ENCODE measurements at regions of chr7 and their contacts with region 1.

Region 1: GRCh38 chr7:2567679-2568278 is 9.0 kb downstream of the IQCE start:
- DNase-seq: peak in 4 of 5 donors; percentile 43 to 72 (median 48)
- ATAC-seq: peak; percentile 79 to 93 (median 84)
- H3K4me3 ChIP-seq: peak overlapping the region in 2 of 12 donors; percentile 2 to 40
- H3K27ac ChIP-seq: no peak overlapping the region
- H3K4me1 ChIP-seq: peaks cover 0 to 19% (median 9%) of the 10 kb centered on the region in 12 donors
- H3K27me3 ChIP-seq: no peaks in the 10 kb centered on the region
- CTCF ChIP-seq: peak; percentile 46 to 70 (median 60)
- POLR2A ChIP-seq: no peak

Region 2: DNA sequence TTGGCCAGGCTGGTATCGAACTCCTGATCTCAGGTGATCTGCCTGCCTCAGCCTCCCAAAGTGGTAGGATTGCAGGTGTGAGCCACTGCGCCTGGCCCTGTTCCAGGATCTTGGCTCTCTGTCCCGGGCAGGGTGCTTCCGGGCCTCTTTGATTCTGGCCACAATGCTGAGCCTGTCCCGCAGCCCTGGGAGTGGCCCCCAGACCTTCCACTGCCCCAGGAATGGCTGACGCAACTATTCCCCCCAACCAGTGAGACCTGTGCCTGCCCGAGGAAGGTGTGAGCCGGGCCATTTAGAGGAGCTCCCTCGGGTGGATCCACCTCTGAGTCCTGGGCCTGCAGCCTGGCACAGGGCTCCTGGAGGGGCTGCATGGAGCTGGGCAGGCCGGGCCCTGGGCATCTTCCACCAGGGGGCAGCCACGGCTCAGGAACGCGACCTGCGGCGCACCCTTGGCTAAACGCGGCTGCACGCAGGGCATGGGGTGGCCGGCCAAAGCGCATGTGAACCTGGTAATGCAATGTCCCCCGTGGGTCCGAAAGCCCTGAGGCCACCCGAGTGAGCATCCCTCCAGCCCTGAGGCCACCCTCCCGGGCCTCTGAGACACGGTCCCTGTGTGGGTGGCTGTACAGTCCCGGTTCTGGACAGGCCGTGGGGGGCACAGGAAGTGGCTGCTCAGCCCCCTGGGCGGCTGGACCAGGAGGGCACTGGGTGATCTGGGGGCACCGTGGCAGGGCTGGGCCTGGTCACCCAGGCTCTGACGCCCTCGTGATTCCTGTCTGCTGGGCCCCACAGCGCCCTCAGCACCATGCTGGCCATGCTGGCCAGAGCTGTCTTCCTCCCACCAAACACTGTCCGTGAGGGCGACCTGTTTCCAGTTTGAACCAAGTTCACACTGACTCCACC is 116.4 kb before region 1 on chr7:
- intact Hi-C with region 1: loop called in 2 of 10 experiments (anchors 10 kb)
- DNase-seq: peak; percentile 84 to 94 (median 86)
- ATAC-seq: peak; percentile 92 to 97 (median 96)
- H3K4me3 ChIP-seq: peak overlapping the region in 11 of 12 donors; percentile 14 to 63 (median 47)
- H3K27ac ChIP-seq: peak overlapping the region in 5 of 12 donors; percentile 3 to 33 (median 13)
- H3K4me1 ChIP-seq: peaks cover 0 to 15% (median 11%) of the 10 kb centered on the region in 12 donors
- H3K27me3 ChIP-seq: no peaks in the 10 kb centered on the region
- CTCF ChIP-seq: peak; percentile 82 to 95 (median 90)
- POLR2A ChIP-seq: no peak

Region 3: DNA sequence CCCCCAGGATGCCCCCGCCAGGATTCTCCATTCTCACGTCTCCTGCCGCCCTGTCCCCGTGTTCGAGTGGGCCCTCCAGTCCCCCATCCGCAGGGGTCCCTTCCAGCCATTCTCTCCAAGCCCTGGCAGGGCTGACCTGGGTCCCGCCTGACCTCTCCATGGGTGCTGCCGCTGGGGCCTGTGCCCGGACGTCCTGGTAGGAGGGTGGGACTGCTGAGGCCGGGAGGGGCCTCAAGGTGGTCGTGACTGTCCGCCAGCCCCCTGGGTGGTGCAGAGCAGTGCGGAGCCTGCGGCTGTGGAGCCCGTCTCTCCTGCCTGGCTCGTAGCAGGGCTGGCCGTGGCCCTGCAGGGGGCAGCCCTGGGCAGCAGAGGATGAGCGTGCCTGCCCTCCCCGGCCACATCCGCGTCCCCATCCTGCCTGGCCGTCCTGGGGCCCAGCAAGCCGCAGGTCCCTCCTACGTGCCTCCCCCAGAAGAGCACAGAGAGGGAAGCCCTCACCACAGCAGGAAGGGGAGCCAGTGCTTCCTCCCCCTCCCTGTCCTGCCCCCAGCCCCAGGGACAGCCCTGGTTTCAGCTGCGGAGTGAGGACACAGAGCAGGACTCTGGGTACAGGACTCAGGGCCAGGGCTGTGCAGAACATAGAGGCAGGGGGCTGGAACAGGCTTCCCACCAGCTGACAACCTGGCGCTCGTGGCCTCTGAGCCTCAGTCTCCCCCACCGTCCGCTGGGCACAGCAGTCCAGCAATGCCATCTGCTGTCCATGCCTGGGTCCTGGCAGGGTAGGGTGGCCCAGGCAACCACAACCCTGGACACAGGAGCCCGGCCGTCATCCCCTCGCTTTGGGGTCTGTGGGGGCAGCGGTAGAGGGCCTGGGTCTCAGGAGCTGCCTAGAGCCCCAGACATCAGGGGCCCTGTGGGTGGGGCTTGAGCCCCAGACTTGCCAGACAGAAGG is 90.1 kb before region 1 on chr7:
- intact Hi-C with region 1: loop called in 1 of 10 experiments (anchors 10 kb)
- DNase-seq: peak; percentile 66 to 89 (median 72)
- ATAC-seq: peak; percentile 81 to 88 (median 84)
- H3K4me3 ChIP-seq: peak overlapping the region in 1 of 12 donors; percentile 12
- H3K27ac ChIP-seq: peak overlapping the region in 4 of 12 donors; percentile 12 to 47 (median 26)
- H3K4me1 ChIP-seq: peaks cover 4 to 37% (median 29%) of the 10 kb centered on the region in 12 donors
- H3K27me3 ChIP-seq: peaks cover 0 to 29% (median 0%) of the 10 kb centered on the region in 9 donors
- CTCF ChIP-seq: peak; percentile 66 to 83 (median 74)
- POLR2A ChIP-seq: no peak

Region 4: GRCh38 chr7:2660585-2661408 is 93.0 kb after region 1 on chr7:
- intact Hi-C with region 1: loop called in 4 of 10 experiments (anchors 5 to 10 kb)
- DNase-seq: peak in 1 of 5 donors; percentile 67
- ATAC-seq: no peak
- H3K4me3 ChIP-seq: no peak overlapping the region
- H3K27ac ChIP-seq: no peak overlapping the region
- H3K4me1 ChIP-seq: peaks cover 0 to 34% (median 16%) of the 10 kb centered on the region in 12 donors
- H3K27me3 ChIP-seq: peaks cover 0 to 2% (median 0%) of the 10 kb centered on the region in 9 donors
- CTCF ChIP-seq: peak in 5 of 12 donors; percentile 6 to 25 (median 22)
- POLR2A ChIP-seq: no peak

Region 5: GRCh38 chr7:2670720-2671391 is 103.1 kb after region 1 on chr7:
- intact Hi-C with region 1: loop called in 3 of 10 experiments (anchors 5 to 10 kb)
- DNase-seq: peak; percentile 65 to 87 (median 74)
- ATAC-seq: peak; percentile 55 to 85 (median 75)
- H3K4me3 ChIP-seq: no peak overlapping the region
- H3K27ac ChIP-seq: no peak overlapping the region
- H3K4me1 ChIP-seq: peaks cover 0 to 7% (median 1%) of the 10 kb centered on the region in 12 donors
- H3K27me3 ChIP-seq: peaks cover 0 to 7% (median 0%) of the 10 kb centered on the region in 9 donors
- CTCF ChIP-seq: peak; percentile 73 to 90 (median 82)
- POLR2A ChIP-seq: no peak

Region 6: DNA sequence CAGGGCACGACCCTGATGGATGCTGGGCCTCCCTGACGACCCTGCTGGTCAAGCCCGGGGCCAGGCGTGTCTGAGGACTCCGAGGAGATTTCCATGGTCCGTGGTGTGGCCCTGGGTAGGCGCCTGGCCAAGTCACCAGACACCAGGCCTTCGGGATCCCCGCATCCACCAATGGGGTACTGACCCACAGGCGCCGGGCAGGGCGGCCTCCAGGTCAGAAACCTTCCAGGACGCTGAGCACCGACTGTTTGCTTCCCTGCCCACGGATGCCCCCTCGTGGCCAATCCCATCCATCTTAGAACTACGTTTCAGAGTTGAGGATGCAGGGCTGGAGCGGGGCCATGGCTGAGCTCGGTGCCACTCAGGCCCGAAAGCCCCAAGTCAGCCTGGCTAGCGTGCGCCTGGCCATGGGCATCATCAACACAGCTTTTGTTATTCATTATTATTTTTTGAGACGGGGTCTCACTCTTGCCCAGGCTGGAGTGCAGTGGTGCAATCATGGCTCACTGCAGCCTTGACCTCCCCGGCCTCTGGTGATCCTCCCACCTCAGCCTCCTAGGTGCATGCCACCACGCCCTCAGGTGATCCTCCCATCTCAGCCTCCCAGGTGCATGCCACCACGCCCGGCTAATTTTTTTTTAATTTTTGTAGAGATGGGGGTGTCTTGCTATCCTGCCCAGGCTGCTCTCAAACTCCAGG is 113.2 kb after region 1 on chr7:
- intact Hi-C with region 1: loop called (anchors 1 to 10 kb)
- DNase-seq: peak; percentile 80 to 90 (median 82)
- ATAC-seq: peak; percentile 72 to 87 (median 80)
- H3K4me3 ChIP-seq: no peak overlapping the region
- H3K27ac ChIP-seq: no peak overlapping the region
- H3K4me1 ChIP-seq: peaks cover 0 to 11% (median 0%) of the 10 kb centered on the region in 12 donors
- H3K27me3 ChIP-seq: peaks cover 0 to 20% (median 3%) of the 10 kb centered on the region in 9 donors
- CTCF ChIP-seq: peak; percentile 68 to 86 (median 78)
- POLR2A ChIP-seq: no peak

Measured in heart left ventricle (tissue), 16 donors.